Right cardiac atrium (tissue), 5 donors: ENCODE measurements at regions of chr5 and their contacts with region 1.

Region 1: GRCh38 chr5:141811287-141812155 is 66.7 kb downstream of the PCDH1 start:
- DNase-seq: no peak
- ATAC-seq: peak in 1 of 2 donors; percentile 42
- H3K4me3 ChIP-seq: no peak overlapping the region
- H3K27ac ChIP-seq: no peak overlapping the region
- H3K4me1 ChIP-seq: peaks cover 6% of the 10 kb centered on the region
- H3K27me3 ChIP-seq: no peaks in the 10 kb centered on the region

Region 2: GRCh38 chr5:141701360-141702119 is 110.0 kb before region 1 on chr5:
- intact Hi-C with region 1: loop called in 3 of 4 experiments (anchors 5 to 10 kb)
- DNase-seq: no peak
- ATAC-seq: peak in 1 of 2 donors; percentile 26
- H3K4me3 ChIP-seq: no peak overlapping the region
- H3K27ac ChIP-seq: no peak overlapping the region
- H3K4me1 ChIP-seq: no peaks in the 10 kb centered on the region
- H3K27me3 ChIP-seq: no peaks in the 10 kb centered on the region

Region 3: GRCh38 chr5:141713616-141714309 is 97.8 kb before region 1 on chr5:
- intact Hi-C with region 1: loop called in 2 of 4 experiments (anchors 10 kb)
- DNase-seq: no peak
- ATAC-seq: peak; percentile 61 to 91
- H3K4me3 ChIP-seq: no peak overlapping the region
- H3K27ac ChIP-seq: no peak overlapping the region
- H3K4me1 ChIP-seq: no peaks in the 10 kb centered on the region
- H3K27me3 ChIP-seq: no peaks in the 10 kb centered on the region

Region 4: GRCh38 chr5:142156839-142157463 is 345.4 kb after region 1 on chr5:
- intact Hi-C with region 1: no loop called
- DNase-seq: no peak
- ATAC-seq: peak in 1 of 2 donors; percentile 48
- H3K4me3 ChIP-seq: no peak overlapping the region
- H3K27ac ChIP-seq: no peak overlapping the region
- H3K4me1 ChIP-seq: no peaks in the 10 kb centered on the region
- H3K27me3 ChIP-seq: no peaks in the 10 kb centered on the region